Heart left ventricle (tissue), 16 donors: ENCODE measurements at regions of chr10 and their contacts with region 1.

Region 1: DNA sequence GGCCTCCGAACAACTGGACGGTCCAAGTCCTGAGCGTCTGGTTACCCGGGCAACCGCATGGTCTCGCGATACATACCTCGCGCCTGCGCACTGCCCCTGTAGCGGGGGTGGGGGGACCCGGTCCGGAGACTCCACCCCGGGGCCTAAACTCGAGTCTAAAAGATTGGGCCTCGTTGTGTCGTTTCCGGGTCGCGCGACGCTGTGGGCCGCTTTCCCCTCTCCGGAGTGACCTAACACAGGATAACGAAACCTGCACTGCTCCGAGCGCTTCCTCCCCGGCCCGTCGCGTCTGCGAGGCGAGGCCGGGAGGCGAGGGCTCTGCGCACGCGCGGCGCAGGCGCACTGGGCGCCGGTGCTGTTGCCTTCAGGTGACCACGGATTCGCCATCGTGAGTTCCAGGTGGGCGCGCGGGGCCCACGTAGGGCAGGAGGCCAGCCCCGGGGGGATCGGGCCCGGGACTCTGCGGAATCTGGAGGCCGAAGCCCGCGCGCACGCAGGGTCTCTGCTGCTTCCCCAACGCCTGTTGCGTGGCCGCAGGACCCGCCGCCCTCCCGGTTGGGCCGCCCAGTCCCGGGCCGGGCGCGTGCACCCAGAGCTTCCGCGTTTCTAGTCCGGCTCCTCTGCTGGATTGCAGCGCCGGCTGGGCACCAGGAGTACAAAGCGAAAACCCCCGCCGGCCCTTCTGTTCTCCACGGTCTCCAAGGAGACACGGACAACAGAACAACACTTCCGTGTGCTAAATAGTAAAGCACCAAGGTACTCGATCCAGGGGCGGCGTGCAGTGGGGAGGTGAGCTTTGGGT is at the start of gene RPP38:
- DNase-seq: peak; percentile 95 to 99 (median 97)
- ATAC-seq: peak; percentile 97 to 99 (median 98)
- H3K4me3 ChIP-seq: peak within 1 kb of the TSS; percentile 63 to 97 (median 88)
- H3K27ac ChIP-seq: peak within 1 kb of the TSS; percentile 85 to 100 (median 95)
- H3K4me1 ChIP-seq: peaks cover 2 to 31% (median 19%) of the 10 kb centered on the region in 12 donors
- H3K27me3 ChIP-seq: peaks cover 0 to 3% (median 0%) of the 10 kb centered on the region in 9 donors
- CTCF ChIP-seq: peak in 1 of 12 donors; percentile 3
- POLR2A ChIP-seq: peak in 1 of 2 donors; percentile 78
- total RNA-seq, gene RPP38: 7.2 to 14.4 (median 8.9) TPM

Region 2: DNA sequence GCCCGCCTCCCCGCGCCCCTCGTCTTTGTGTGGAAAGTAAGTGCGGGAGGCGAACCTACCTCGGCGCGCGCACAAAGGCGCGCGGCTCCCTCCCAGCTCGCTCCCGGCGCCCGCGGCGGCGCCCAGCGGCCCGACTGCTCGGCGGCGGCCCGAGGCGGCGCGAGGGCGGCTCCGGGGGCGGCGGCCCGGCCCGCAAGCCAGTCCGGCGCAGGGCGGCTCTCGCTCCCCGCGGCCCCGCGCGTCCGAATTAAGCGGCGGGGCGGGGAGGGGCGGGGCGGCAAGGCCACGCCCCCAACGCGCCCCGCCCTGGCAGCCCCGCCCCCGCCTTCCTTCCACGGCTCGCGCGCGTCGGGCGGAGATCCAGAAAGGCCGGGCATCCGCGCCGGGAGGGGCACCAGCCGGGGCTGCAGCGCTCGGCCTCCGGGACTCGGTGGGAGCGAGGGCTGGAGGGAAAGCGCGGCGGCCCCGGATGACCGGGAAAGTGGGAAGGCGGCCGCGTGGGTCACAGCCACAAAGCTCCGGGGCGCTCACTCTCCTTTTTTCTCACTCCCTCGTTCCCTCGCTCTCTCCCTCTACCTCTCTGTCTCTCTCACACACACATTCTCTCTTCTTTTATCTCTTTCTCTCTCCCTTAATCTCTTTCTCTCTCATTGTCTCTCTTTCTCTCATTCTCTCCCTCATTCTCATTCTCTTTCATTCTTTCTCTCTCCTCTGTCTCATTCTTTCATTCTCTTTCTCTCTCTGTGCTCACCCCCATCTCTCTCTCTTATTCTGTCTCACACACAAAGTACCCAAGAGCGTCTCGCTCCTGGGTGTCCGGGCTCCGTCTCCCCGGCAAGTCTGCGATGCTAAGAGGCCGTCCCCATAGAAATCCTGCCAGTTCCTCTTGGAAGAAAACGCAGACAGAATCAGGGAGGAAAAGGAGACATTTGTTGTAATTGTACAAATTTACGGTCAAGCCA is 492.8 kb before region 1 on chr10:
- intact Hi-C with region 1: loop called in 1 of 10 experiments (anchors 10 kb)
- DNase-seq: peak; percentile 80 to 93 (median 88)
- ATAC-seq: peak; percentile 76 to 97 (median 94)
- H3K4me3 ChIP-seq: peak overlapping the region; percentile 39 to 78 (median 65)
- H3K27ac ChIP-seq: peak overlapping the region in 10 of 12 donors; percentile 37 to 83 (median 70)
- H3K4me1 ChIP-seq: peaks cover 0 to 45% (median 14%) of the 10 kb centered on the region in 12 donors
- H3K27me3 ChIP-seq: no peaks in the 10 kb centered on the region
- CTCF ChIP-seq: no peak
- POLR2A ChIP-seq: peak in 1 of 2 donors; percentile 64